Caco-2 (cell line): ENCODE measurements at regions of chr10 and their contacts with region 1.

Region 1: GRCh38 chr10:52951824-52952223 is 179.2 kb upstream of the MBL2 start:
- DNase-seq: peak; percentile 83 to 84
- H3K4me3 ChIP-seq: no peak overlapping the region
- H3K4me3 Mint-ChIP-seq: no peak overlapping the region
- H3K27ac Mint-ChIP-seq: peak overlapping the region; percentile 53
- H3K4me1 ChIP-seq: peaks cover 25% of the 10 kb centered on the region
- H3K4me1 Mint-ChIP-seq: peaks cover 25% of the 10 kb centered on the region
- H3K27me3 ChIP-seq: no peaks in the 10 kb centered on the region
- H3K27me3 Mint-ChIP-seq: no peaks in the 10 kb centered on the region
- CTCF ChIP-seq: peak; percentile 71 to 78

Region 2: DNA sequence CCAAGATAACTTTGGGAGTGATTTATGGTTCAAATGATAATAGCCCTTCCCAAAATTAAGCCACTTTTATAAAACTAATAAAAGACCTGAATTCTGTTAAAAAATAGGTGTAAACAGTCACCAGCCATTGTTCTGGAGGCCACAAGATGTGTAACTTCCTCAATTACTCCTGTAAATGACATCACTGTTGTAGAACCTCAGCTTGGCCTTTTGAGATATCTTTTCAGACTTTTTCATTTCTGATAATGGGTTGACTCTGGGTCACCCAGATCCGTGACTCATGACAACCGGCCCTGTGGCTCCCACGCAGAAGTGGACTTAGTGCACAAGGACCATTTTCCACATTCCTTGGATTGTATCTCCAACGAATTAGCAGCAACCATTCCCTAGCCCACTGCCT is 531.2 kb before region 1 on chr10:
- CTCF ChIA-PET with region 1: no interaction called
- POLR2A ChIA-PET with region 1: no interaction called
- intact Hi-C with region 1: no loop called
- DNase-seq: no peak
- H3K4me3 ChIP-seq: no peak overlapping the region
- H3K4me3 Mint-ChIP-seq: no peak overlapping the region
- H3K27ac Mint-ChIP-seq: no peak overlapping the region
- H3K4me1 ChIP-seq: no peaks in the 10 kb centered on the region
- H3K4me1 Mint-ChIP-seq: no peaks in the 10 kb centered on the region
- H3K27me3 ChIP-seq: no peaks in the 10 kb centered on the region
- H3K27me3 Mint-ChIP-seq: no peaks in the 10 kb centered on the region
- CTCF ChIP-seq: no peak

Region 3: GRCh38 chr10:52818019-52818418 is 133.8 kb before region 1 on chr10:
- CTCF ChIA-PET with region 1: interaction called, 32 read pairs
- POLR2A ChIA-PET with region 1: no interaction called
- intact Hi-C with region 1: loop called (anchors 1 kb)
- DNase-seq: peak in 1 of 2 experiments; percentile 76
- H3K4me3 ChIP-seq: no peak overlapping the region
- H3K4me3 Mint-ChIP-seq: no peak overlapping the region
- H3K27ac Mint-ChIP-seq: no peak overlapping the region
- H3K4me1 ChIP-seq: no peaks in the 10 kb centered on the region; the same call in 1 of the 2 replicates
- H3K4me1 Mint-ChIP-seq: no peaks in the 10 kb centered on the region
- H3K27me3 ChIP-seq: no peaks in the 10 kb centered on the region; the same call in 1 of the 2 replicates
- H3K27me3 Mint-ChIP-seq: peaks cover 3% of the 10 kb centered on the region
- CTCF ChIP-seq: peak; percentile 89 to 90

Region 4: DNA sequence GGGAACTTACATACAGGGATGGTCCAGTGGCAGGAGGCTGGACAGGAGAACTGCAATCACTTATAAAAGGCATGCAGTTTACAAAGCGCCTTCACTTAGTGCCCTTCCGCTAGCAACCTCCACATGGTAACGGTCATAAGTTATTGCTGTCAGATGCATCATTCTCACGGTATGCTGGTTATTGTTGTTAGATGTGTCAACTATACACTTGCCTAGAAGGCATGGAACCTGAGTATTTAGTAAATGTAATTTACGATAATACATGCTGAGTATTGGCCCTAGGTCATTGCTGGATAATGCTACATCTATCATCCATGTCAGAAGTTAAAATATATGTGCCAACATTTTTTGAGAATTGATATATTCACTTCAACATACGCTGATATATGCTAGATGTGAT is 24.1 kb before region 1 on chr10:
- CTCF ChIA-PET with region 1: no interaction called
- POLR2A ChIA-PET with region 1: no interaction called
- intact Hi-C with region 1: no loop called
- DNase-seq: no peak
- H3K4me3 ChIP-seq: no peak overlapping the region
- H3K4me3 Mint-ChIP-seq: no peak overlapping the region
- H3K27ac Mint-ChIP-seq: no peak overlapping the region
- H3K4me1 ChIP-seq: no peaks in the 10 kb centered on the region
- H3K4me1 Mint-ChIP-seq: no peaks in the 10 kb centered on the region
- H3K27me3 ChIP-seq: no peaks in the 10 kb centered on the region
- H3K27me3 Mint-ChIP-seq: no peaks in the 10 kb centered on the region
- CTCF ChIP-seq: no peak

Region 5: DNA sequence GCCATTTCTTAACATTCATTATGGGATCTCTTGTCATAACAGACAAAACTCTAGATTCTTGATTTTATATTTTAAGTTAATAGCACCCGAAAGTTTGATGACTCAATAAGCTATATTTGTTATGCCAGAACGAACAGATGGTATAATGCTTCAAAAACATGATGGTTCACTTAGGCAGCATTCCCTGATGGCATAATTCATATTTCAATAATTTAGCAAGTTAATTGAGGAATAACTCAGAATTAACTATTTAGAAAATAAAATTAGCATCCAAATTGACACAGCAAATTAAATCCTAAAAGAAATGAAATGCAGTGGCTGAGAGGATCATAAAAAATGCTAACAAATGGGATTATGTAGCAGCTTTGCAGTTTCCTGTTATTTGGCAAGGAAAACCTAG is 81.6 kb after region 1 on chr10:
- CTCF ChIA-PET with region 1: no interaction called
- POLR2A ChIA-PET with region 1: no interaction called
- intact Hi-C with region 1: loop called (anchors 5 kb)
- DNase-seq: no peak
- H3K4me3 ChIP-seq: no peak overlapping the region
- H3K4me3 Mint-ChIP-seq: no peak overlapping the region
- H3K27ac Mint-ChIP-seq: no peak overlapping the region
- H3K4me1 ChIP-seq: peaks cover 31% of the 10 kb centered on the region
- H3K4me1 Mint-ChIP-seq: peaks cover 22% of the 10 kb centered on the region
- H3K27me3 ChIP-seq: no peaks in the 10 kb centered on the region
- H3K27me3 Mint-ChIP-seq: no peaks in the 10 kb centered on the region
- CTCF ChIP-seq: no peak

Region 6: GRCh38 chr10:53079283-53079682 is 127.5 kb after region 1 on chr10:
- CTCF ChIA-PET with region 1: no interaction called
- POLR2A ChIA-PET with region 1: no interaction called
- intact Hi-C with region 1: no loop called
- DNase-seq: no peak
- H3K4me3 ChIP-seq: no peak overlapping the region
- H3K4me3 Mint-ChIP-seq: no peak overlapping the region
- H3K27ac Mint-ChIP-seq: no peak overlapping the region
- H3K4me1 ChIP-seq: no peaks in the 10 kb centered on the region
- H3K4me1 Mint-ChIP-seq: no peaks in the 10 kb centered on the region
- H3K27me3 ChIP-seq: no peaks in the 10 kb centered on the region
- H3K27me3 Mint-ChIP-seq: no peaks in the 10 kb centered on the region
- CTCF ChIP-seq: no peak

Region 7: GRCh38 chr10:53093878-53094277 is 142.1 kb after region 1 on chr10:
- CTCF ChIA-PET with region 1: no interaction called
- POLR2A ChIA-PET with region 1: no interaction called
- intact Hi-C with region 1: no loop called
- DNase-seq: no peak
- H3K4me3 ChIP-seq: no peak overlapping the region
- H3K4me3 Mint-ChIP-seq: no peak overlapping the region
- H3K27ac Mint-ChIP-seq: no peak overlapping the region
- H3K4me1 ChIP-seq: no peaks in the 10 kb centered on the region
- H3K4me1 Mint-ChIP-seq: no peaks in the 10 kb centered on the region
- H3K27me3 ChIP-seq: no peaks in the 10 kb centered on the region
- H3K27me3 Mint-ChIP-seq: no peaks in the 10 kb centered on the region
- CTCF ChIP-seq: no peak

Region 8: DNA sequence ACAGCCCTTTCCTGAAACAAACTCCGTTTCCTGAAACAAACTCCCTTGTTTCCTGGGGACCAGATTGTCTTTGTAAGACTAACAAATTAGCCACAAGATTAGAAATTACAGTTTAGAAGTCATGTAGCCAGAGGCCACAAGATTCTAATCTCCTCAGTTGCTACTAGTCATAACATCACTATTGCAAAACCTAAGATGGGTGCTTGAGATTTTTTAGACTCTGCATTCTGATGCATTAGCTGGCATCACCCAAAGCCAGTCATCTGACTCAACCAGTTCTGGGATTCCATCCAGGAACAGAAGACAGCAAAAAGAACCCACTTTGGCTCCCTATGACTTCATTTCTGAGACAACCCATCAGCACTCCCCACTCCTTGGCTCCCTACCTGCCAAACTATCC is 188.7 kb after region 1 on chr10:
- CTCF ChIA-PET with region 1: no interaction called
- POLR2A ChIA-PET with region 1: no interaction called
- intact Hi-C with region 1: loop called (anchors 2 kb)
- DNase-seq: no peak
- H3K4me3 ChIP-seq: no peak overlapping the region
- H3K4me3 Mint-ChIP-seq: no peak overlapping the region
- H3K27ac Mint-ChIP-seq: no peak overlapping the region
- H3K4me1 ChIP-seq: peaks cover 29% of the 10 kb centered on the region
- H3K4me1 Mint-ChIP-seq: peaks cover 26% of the 10 kb centered on the region
- H3K27me3 ChIP-seq: no peaks in the 10 kb centered on the region
- H3K27me3 Mint-ChIP-seq: no peaks in the 10 kb centered on the region
- CTCF ChIP-seq: no peak

Region 9: GRCh38 chr10:53209944-53210611 is 258.3 kb after region 1 on chr10:
- CTCF ChIA-PET with region 1: interaction called, 4 read pairs
- POLR2A ChIA-PET with region 1: no interaction called
- intact Hi-C with region 1: loop called (anchors 1 kb)
- DNase-seq: peak in 1 of 2 experiments; percentile 45
- H3K4me3 ChIP-seq: no peak overlapping the region
- H3K4me3 Mint-ChIP-seq: no peak overlapping the region
- H3K27ac Mint-ChIP-seq: no peak overlapping the region
- H3K4me1 ChIP-seq: 0 out of 2 replicates have a peak, but pooled peaks cover 3% of the 10 kb centered on the region
- H3K4me1 Mint-ChIP-seq: no peaks in the 10 kb centered on the region
- H3K27me3 ChIP-seq: no peaks in the 10 kb centered on the region
- H3K27me3 Mint-ChIP-seq: peaks cover 2% of the 10 kb centered on the region
- CTCF ChIP-seq: peak; percentile 77

Region 10: DNA sequence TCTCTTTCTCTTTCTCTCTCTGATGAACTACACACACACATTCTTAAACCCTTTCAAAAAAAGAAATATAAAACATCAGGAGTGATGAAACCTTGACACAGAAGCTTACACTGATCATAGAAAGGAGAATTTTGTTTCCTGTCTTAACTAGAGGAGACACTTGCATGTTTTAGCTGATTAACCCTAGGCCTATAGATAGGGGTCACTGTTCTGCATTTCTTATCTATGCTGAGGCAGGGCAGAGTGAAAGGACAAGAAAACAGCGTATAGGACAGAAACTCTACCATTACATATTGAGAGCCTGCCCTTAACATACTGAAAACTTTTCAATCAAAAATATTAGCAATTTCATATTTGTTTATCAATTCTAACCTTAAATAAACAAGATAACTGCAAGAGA is 501.4 kb after region 1 on chr10:
- CTCF ChIA-PET with region 1: no interaction called
- POLR2A ChIA-PET with region 1: no interaction called
- intact Hi-C with region 1: loop called (anchors 5 kb)
- DNase-seq: peak in 1 of 2 experiments; percentile 20
- H3K4me3 ChIP-seq: no peak overlapping the region
- H3K4me3 Mint-ChIP-seq: no peak overlapping the region
- H3K27ac Mint-ChIP-seq: no peak overlapping the region
- H3K4me1 ChIP-seq: no peaks in the 10 kb centered on the region
- H3K4me1 Mint-ChIP-seq: no peaks in the 10 kb centered on the region
- H3K27me3 ChIP-seq: no peaks in the 10 kb centered on the region
- H3K27me3 Mint-ChIP-seq: no peaks in the 10 kb centered on the region
- CTCF ChIP-seq: peak; percentile 59 to 64

Region 11: GRCh38 chr10:53808677-53809372 is 857.0 kb after region 1 on chr10:
- CTCF ChIA-PET with region 1: no interaction called
- POLR2A ChIA-PET with region 1: no interaction called
- intact Hi-C with region 1: loop called (anchors 1 kb)
- DNase-seq: peak; percentile 47 to 59
- H3K4me3 ChIP-seq: no peak overlapping the region
- H3K4me3 Mint-ChIP-seq: no peak overlapping the region
- H3K27ac Mint-ChIP-seq: no peak overlapping the region
- H3K4me1 ChIP-seq: no peaks in the 10 kb centered on the region
- H3K4me1 Mint-ChIP-seq: peaks cover 7% of the 10 kb centered on the region
- H3K27me3 ChIP-seq: no peaks in the 10 kb centered on the region; the same call in 1 of the 2 replicates
- H3K27me3 Mint-ChIP-seq: peaks cover 7% of the 10 kb centered on the region
- CTCF ChIP-seq: peak in 1 of 2 experiments; percentile 58